ENCODE measurements at regions of chr9 and their contacts with region 1.

Region 1: DNA sequence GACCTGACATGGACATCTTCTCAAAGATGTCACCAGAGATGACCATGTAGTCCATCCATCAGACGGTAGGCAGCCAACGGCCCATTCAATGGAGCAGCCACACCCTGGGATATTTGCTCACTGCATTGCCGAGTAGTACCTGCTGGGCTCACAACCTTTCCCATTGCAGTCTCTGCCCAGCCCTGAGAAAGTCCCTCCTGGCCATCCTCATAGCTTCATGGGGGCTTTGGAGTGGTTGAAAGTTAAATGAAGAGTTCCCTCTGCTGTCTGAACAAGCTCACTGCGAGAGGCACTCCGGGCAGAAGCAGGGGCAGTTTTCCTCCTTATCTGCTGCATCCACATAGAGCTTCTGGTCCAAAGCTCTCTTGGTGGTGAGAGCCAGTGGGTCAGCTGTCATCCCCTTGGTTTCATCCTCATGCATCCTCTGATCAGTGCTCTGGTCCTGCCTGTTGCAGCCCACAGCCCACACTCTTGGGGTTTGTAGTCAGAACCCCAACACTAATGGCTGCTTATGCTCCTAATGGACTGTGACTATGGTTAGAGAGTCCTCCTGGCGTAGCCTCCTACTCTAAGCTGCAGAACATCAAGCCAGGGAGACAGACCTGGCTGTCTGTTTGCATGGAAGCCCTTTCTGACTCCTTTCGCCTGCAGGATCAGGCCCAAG is 23.4 kb downstream of the TNFSF8 start:
- DNase-seq: peak; percentile 50
- H3K4me3 Mint-ChIP-seq: no peak overlapping the region
- H3K27ac Mint-ChIP-seq: no peak overlapping the region
- H3K4me1 Mint-ChIP-seq: peaks cover 51% of the 10 kb centered on the region
- H3K27me3 Mint-ChIP-seq: no peaks in the 10 kb centered on the region
- CTCF ChIP-seq: peak; percentile 49

Region 2: GRCh38 chr9:114405294-114406034 is 501.6 kb before region 1 on chr9:
- CTCF ChIA-PET with region 1: interaction called, 10 read pairs
- POLR2A ChIA-PET with region 1: no interaction called
- intact Hi-C with region 1: loop called (anchors 5 kb)
- DNase-seq: peak; percentile 84
- H3K4me3 Mint-ChIP-seq: no peak overlapping the region
- H3K27ac Mint-ChIP-seq: no peak overlapping the region
- H3K4me1 Mint-ChIP-seq: peaks cover 11% of the 10 kb centered on the region
- H3K27me3 Mint-ChIP-seq: no peaks in the 10 kb centered on the region
- CTCF ChIP-seq: peak; percentile 83

Region 3: DNA sequence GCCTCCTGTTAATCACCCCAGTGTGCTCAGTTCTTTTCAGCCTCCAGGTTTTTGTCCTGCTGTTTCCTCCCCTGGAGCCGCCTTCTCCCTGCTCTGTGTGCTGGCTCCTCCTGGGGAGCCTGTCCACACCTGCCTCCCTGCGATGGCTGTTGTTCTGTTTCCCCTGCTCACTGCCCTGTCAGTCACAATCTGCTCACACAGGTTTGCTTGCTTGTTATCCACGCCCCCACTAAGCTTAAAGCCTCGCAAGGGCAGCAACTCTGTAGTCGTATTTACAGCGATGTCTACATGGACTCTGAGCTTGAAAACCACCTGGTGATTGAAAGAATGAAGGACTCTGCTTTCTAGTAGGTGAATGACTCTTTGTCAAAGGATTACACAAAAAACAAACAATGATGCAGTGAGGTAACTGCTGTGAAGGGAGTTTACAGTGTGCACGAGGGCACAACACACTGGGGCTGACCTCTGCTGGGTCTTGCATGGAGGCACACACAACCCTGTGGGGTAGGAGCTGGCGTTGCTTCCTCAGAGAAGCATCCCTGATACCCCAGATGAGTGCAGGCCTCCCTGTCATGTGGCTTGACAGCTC is 185.5 kb before region 1 on chr9:
- CTCF ChIA-PET with region 1: interaction called, 10 read pairs
- POLR2A ChIA-PET with region 1: interaction called, 5 read pairs
- intact Hi-C with region 1: no loop called
- DNase-seq: peak; percentile 49
- H3K4me3 Mint-ChIP-seq: peak overlapping the region; percentile 6
- H3K27ac Mint-ChIP-seq: peak overlapping the region; percentile 3
- H3K4me1 Mint-ChIP-seq: peaks cover 36% of the 10 kb centered on the region
- H3K27me3 Mint-ChIP-seq: no peaks in the 10 kb centered on the region
- CTCF ChIP-seq: no peak

Region 4: DNA sequence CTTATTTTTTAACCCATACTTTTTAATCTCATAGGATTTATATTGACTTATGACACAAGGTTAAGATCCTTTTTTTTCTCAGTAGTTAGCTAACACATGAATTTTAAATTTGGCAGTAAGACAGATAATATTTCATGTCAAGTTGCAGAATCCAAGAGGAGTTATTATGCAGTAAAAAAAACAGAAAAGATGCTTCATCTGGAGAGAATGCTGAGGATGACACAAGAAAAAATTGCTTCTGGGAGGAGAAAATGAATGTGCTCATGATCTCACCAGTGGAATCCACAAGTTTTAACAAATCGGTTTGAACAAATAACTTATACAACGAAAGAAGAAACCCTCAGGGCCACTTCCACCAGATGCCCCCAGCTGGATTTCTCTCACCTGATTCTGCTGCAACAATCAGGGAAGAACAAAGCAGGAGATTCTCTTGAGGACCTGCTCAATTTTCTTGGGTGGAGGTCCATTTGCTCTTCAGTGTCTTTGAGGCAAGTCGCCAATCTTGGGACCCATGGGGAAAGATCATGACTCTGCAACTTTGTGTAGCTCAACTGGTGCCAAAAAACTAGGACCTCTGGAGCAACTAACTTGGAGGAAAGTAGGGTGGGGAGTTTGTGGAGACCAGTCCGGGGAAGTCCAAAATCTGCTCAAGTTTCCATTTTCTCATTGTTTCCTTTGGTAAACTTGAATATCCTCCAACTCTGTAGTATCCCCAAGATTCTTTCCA is 50.7 kb before region 1 on chr9:
- CTCF ChIA-PET with region 1: interaction called, 3 read pairs
- POLR2A ChIA-PET with region 1: interaction called, 3 read pairs
- intact Hi-C with region 1: loop called (anchors 5 kb)
- DNase-seq: peak; percentile 23
- H3K4me3 Mint-ChIP-seq: no peak overlapping the region
- H3K27ac Mint-ChIP-seq: peak overlapping the region; percentile 66
- H3K4me1 Mint-ChIP-seq: peaks cover 25% of the 10 kb centered on the region
- H3K27me3 Mint-ChIP-seq: peaks cover 4% of the 10 kb centered on the region
- CTCF ChIP-seq: no peak

Region 5: DNA sequence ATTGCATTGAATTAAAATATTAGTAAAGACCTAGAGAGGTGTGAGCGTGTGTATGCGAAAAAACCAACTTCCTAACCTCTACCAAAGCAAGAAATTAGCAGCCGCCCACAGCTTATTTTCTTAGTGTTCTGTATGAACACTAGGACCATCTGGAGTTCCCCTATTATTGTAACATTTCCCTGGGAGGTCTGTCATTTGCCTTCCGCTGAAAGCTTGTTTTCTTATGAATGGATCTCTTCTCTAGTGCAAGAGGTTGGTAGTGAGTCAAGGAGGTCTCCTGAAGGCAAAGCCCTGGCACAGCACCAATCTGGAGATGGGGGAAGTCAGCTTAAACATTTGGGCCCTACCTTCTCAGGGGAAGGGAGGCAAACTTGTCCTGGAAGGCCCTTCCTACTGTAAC is 12.6 kb after region 1 on chr9:
- CTCF ChIA-PET with region 1: interaction called, 26 read pairs
- POLR2A ChIA-PET with region 1: no interaction called
- intact Hi-C with region 1: no loop called
- DNase-seq: no peak
- H3K4me3 Mint-ChIP-seq: no peak overlapping the region
- H3K27ac Mint-ChIP-seq: no peak overlapping the region
- H3K4me1 Mint-ChIP-seq: no peaks in the 10 kb centered on the region
- H3K27me3 Mint-ChIP-seq: no peaks in the 10 kb centered on the region
- CTCF ChIP-seq: no peak

Region 6: DNA sequence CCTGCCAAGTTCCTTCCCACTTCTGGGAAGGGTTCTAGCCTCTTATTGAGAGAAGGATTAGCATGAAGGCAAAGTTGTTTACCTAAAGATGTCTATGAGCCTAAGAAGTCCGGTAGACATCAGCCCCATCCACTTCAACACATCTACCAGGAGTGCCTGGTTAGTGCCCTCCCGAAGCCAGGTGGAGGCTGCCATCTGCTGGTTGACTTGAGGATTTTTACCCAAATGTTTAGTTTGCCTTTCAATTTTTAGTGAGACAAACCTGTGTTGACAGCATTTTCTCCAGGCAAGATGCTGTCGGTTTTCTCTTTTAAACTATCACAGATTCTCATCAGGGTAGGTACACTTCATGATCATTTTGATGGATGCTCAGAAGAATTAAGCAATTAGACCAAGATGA is 107.0 kb after region 1 on chr9:
- CTCF ChIA-PET with region 1: interaction called, 39 read pairs
- POLR2A ChIA-PET with region 1: interaction called, 5 read pairs
- intact Hi-C with region 1: loop called (anchors 1 kb)
- DNase-seq: peak; percentile 84
- H3K4me3 Mint-ChIP-seq: no peak overlapping the region
- H3K27ac Mint-ChIP-seq: no peak overlapping the region
- H3K4me1 Mint-ChIP-seq: peaks cover 17% of the 10 kb centered on the region
- H3K27me3 Mint-ChIP-seq: peaks cover 14% of the 10 kb centered on the region
- CTCF ChIP-seq: peak; percentile 75

Region 7: GRCh38 chr9:115306865-115307264 is 399.8 kb after region 1 on chr9:
- CTCF ChIA-PET with region 1: no interaction called
- POLR2A ChIA-PET with region 1: no interaction called
- intact Hi-C with region 1: no loop called
- DNase-seq: no peak
- H3K4me3 Mint-ChIP-seq: no peak overlapping the region
- H3K27ac Mint-ChIP-seq: no peak overlapping the region
- H3K4me1 Mint-ChIP-seq: no peaks in the 10 kb centered on the region
- H3K27me3 Mint-ChIP-seq: no peaks in the 10 kb centered on the region
- CTCF ChIP-seq: no peak

Measured in MCF 10A (cell line).